AG04450 (cell line): ENCODE measurements at regions of chr3 and their contacts with region 1.

Region 1: GRCh38 chr3:158644345-158644908 is at the start of gene GFM1:
- DNase-seq: peak; percentile 86
- H3K4me3 ChIP-seq: peak within 1 kb of the TSS; percentile 92
- H3K27ac ChIP-seq: peak within 1 kb of the TSS; percentile 87
- H3K27me3 ChIP-seq: no peaks in the 10 kb centered on the region
- CTCF ChIP-seq: peak; percentile 94
- polyA plus RNA-seq, gene GFM1: 18.9 and 22.2 TPM in 2 replicates

Region 2: GRCh38 chr3:158570999-158571974 is 73.1 kb before region 1 on chr3 and contains the start of gene MLF1:
- CTCF ChIA-PET with region 1: interaction called, 16 read pairs
- POLR2A ChIA-PET with region 1: interaction called, 4 read pairs
- DNase-seq: peak; percentile 80
- H3K4me3 ChIP-seq: peak within 1 kb of the TSS; percentile 73
- H3K27ac ChIP-seq: peak within 1 kb of the TSS; percentile 41
- H3K27me3 ChIP-seq: no peaks in the 10 kb centered on the region
- CTCF ChIP-seq: no peak
- polyA plus RNA-seq, gene MLF1: 6.7 and 10.1 TPM in 2 replicates

Region 3: GRCh38 chr3:158801696-158802408 is 157.4 kb after region 1 on chr3 and contains the start of gene MFSD1:
- CTCF ChIA-PET with region 1: interaction called, 20 read pairs
- POLR2A ChIA-PET with region 1: interaction called, 15 read pairs
- DNase-seq: peak; percentile 67
- H3K4me3 ChIP-seq: peak within 1 kb of the TSS; percentile 79
- H3K27ac ChIP-seq: peak within 1 kb of the TSS; percentile 74
- H3K27me3 ChIP-seq: no peaks in the 10 kb centered on the region
- CTCF ChIP-seq: no peak
- polyA plus RNA-seq, gene MFSD1: 69.6 and 89.9 TPM in 2 replicates